Prostate gland (tissue), 2 donors: ENCODE measurements at regions of chr12 and their contacts with region 1.

Region 1: DNA sequence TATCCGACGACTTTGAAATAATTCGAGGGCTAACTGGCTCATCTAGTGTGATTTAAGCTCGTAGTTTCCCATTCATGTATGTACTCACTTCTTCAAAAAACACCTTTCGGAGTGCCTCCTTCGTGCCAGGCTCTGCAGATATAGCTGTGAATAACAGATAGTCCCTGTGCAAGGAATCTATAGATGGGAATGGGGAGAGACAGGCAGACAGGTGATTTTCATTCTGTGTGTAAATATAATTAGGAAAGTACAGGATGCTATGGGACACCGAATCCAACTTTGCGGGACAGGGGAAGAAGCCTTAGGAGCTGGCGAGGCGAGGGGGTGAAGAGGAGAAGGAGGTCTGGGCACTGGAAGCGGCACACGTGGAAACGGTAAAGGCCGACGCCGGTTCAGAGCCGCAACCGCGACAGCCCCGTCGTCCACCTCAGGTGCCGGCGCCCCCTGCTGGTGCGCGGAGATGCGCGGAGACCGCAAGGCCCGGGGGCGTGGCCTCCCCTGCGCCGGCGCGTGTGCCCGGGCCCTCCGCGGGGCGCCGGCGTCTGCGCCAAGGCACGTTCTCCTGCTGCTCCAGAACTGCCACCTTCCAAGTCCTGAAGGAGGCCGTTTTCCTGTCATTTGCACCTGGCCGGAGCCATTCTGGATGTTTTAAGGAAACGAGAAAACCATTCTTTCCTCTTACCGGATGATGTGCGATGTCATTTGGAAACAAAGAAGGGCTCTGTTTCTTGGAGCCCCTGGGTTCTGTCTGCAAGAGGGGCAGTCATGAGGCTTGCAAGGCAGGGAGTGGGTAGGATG is 18.0 kb upstream of the CACNA1C start:
- DNase-seq: peak; percentile 83
- H3K4me3 ChIP-seq: peak overlapping the region; percentile 12 to 13
- H3K27ac ChIP-seq: no peak overlapping the region
- H3K4me1 ChIP-seq: peaks cover 5% of the 10 kb centered on the region
- H3K27me3 ChIP-seq: no peaks in the 10 kb centered on the region
- CTCF ChIP-seq: peak; percentile 86 to 95 (median 92)
- POLR2A ChIP-seq: peak; percentile 26

Region 2: GRCh38 chr12:1650260-1650977 is 384.4 kb before region 1 on chr12:
- intact Hi-C with region 1: loop called (anchors 10 kb)
- DNase-seq: no peak
- H3K4me3 ChIP-seq: no peak overlapping the region
- H3K27ac ChIP-seq: no peak overlapping the region
- H3K4me1 ChIP-seq: no peaks in the 10 kb centered on the region
- H3K27me3 ChIP-seq: no peaks in the 10 kb centered on the region
- CTCF ChIP-seq: no peak
- POLR2A ChIP-seq: no peak

Region 3: DNA sequence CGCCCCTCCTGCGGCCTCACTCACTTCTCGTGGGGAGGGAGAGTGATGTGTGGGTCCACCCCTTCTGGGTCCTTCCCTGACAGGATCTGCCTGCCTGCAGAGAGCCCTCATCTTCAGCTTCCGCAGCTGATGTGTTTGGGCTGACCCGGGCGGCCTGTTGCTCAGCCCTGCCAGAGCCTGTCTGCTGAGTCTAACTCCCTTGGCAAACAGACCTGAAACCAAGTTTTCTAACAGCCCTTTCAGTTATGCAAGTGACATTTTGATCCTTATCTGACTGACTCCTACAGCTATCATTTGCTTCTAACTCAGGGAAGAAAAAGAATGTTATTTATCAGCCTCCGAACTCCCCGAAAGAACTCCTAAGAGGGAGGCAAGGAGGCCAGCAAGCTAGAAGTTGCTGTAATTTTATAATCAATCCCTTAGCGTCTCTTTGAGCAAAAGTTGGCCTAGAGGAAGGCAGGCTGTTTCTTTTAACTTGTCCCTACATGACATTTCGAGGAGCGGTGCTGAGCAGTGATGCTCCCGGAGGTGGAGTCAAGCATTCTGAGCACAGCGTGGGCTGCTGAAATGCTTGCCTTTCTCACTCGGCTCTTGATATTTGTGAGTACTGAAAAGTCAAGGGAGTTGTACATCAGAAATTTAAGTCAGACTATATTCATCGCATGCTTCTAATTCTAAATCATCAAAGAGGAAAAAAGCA is 84.9 kb before region 1 on chr12:
- intact Hi-C with region 1: loop called (anchors 5 kb)
- DNase-seq: peak; percentile 34
- H3K4me3 ChIP-seq: no peak overlapping the region
- H3K27ac ChIP-seq: peak overlapping the region; percentile 47 to 58
- H3K4me1 ChIP-seq: peaks cover 3% of the 10 kb centered on the region
- H3K27me3 ChIP-seq: no peaks in the 10 kb centered on the region
- CTCF ChIP-seq: no peak
- POLR2A ChIP-seq: no peak